Prostate gland (tissue), 2 donors: ENCODE measurements at regions of chr22 and their contacts with region 1.

Region 1: GRCh38 chr22:42437488-42438292 is 5.5 kb upstream of the NFAM1 start:
- DNase-seq: no peak
- H3K4me3 ChIP-seq: peak overlapping the region; percentile 27 to 41
- H3K27ac ChIP-seq: no peak overlapping the region
- H3K4me1 ChIP-seq: peaks cover 5% of the 10 kb centered on the region
- H3K27me3 ChIP-seq: no peaks in the 10 kb centered on the region
- CTCF ChIP-seq: peak; percentile 96 to 99 (median 98)
- POLR2A ChIP-seq: no peak

Region 2: DNA sequence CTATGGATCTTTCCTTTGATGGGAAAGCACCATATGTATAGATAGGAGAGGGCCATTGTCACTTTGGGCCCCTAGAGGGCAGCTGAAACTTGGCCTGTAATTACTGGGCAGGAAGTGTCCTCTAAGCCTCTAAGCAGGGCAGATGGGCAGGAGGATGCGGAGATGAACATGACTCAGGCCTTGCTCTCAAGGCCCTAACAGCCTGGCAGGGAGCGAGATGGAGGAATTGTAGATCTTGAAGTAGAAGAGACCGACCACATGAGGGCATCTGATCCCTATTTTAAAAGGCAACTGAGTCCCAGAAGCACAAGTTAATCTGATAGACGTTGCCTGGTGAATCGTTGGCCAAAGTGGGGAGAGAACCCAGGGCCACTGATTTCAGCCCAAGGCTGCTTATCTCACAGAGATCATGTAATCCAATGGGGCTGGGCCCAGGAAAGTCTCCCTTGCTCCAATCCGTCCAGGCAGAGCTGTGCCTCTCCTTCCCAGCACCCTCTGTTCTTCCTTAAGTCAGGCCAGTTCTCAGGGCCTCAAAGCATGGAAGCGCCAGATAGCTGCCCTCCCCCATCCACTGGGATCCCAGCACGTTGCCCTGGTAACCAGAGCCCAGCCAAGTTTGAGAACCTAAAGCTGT is 471.0 kb before region 1 on chr22:
- intact Hi-C with region 1: loop called (anchors 10 kb)
- DNase-seq: peak; percentile 28
- H3K4me3 ChIP-seq: no peak overlapping the region
- H3K27ac ChIP-seq: no peak overlapping the region
- H3K4me1 ChIP-seq: no peaks in the 10 kb centered on the region
- H3K27me3 ChIP-seq: no peaks in the 10 kb centered on the region
- CTCF ChIP-seq: peak in 2 of 4 experiments; percentile 15 to 30
- POLR2A ChIP-seq: no peak

Region 3: DNA sequence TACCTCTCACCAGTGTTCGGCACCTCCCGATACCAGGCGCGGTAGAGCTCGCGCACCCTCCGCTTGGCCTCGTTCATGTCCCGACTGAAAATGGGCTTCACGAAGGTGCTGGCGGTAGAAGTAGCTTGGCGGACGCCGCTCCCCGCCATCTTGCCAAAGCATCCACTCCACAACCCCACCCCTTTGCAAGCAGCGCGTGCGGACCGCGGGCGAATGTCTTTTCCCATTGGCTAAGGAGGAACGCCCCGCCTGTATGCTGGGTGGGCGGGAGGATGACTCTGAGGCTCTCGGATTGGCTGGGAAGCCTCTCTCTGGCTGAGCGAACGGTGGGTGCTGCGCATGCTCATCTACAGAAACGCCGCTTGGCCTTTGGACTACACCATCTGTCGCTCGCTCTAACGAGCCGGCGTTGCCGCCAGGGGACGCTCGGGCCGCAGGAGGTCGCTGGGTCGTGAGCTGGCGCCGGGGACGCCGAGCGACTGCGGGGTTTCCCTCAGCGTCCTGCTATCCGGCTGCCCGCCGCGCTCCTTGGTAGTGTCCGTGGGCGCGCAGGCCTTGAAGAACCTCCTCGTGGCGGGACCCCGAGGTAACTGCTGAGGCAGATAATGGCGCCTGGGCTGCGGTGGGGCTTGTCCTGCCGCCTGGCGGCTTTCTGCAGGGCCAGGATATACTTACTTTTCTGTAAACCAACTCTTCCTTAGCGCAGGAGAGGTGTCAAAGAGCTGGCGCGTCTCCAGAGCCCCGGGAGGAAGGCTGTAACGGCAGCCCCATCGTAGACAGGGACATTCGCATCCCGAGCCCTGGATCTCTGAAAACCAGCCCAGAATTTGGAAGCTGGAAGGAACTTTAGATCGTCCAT is 346.9 kb before region 1 on chr22 and contains the start of gene NDUFA6:
- intact Hi-C with region 1: loop called (anchors 2 kb)
- DNase-seq: peak; percentile 100
- H3K4me3 ChIP-seq: peak within 1 kb of the TSS; percentile 62 to 68
- H3K27ac ChIP-seq: peak within 1 kb of the TSS; percentile 90 to 92
- H3K4me1 ChIP-seq: no peaks in the 10 kb centered on the region
- H3K27me3 ChIP-seq: no peaks in the 10 kb centered on the region
- CTCF ChIP-seq: peak; percentile 87 to 100 (median 94)
- POLR2A ChIP-seq: peak; percentile 90
- total RNA-seq, gene NDUFA6: 52.9 to 53.1 TPM

Region 4: DNA sequence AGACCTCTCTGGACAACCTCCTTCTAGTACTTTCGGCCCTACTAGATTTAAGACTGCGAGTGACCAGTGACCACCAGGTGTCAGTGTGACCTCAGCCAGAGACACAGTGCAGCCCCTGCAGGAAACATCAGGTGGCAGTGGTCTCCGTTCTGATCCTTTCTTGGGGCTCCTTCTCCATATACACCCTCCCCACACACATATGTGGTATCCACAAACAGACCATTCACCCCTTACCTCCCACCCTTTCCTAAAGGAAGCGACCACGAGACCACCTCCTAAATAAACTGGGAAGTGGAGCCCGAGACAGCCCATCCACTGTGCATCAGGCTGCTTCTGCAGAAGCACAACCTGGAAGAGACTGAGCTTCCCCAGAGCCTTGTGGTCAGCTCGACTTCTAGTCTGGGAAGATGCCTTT is 268.6 kb before region 1 on chr22:
- intact Hi-C with region 1: loop called (anchors 1 kb)
- DNase-seq: peak; percentile 60
- H3K4me3 ChIP-seq: no peak overlapping the region
- H3K27ac ChIP-seq: no peak overlapping the region
- H3K4me1 ChIP-seq: peaks cover 5% of the 10 kb centered on the region
- H3K27me3 ChIP-seq: no peaks in the 10 kb centered on the region
- CTCF ChIP-seq: peak; percentile 73 to 89 (median 85)
- POLR2A ChIP-seq: no peak

Region 5: GRCh38 chr22:42270512-42271417 is 166.9 kb before region 1 on chr22 and contains the start of gene TCF20:
- intact Hi-C with region 1: loop called (anchors 10 kb)
- DNase-seq: peak; percentile 76
- H3K4me3 ChIP-seq: peak within 1 kb of the TSS; percentile 94 to 99
- H3K27ac ChIP-seq: peak within 1 kb of the TSS; percentile 86 to 90
- H3K4me1 ChIP-seq: no peaks in the 10 kb centered on the region
- H3K27me3 ChIP-seq: no peaks in the 10 kb centered on the region
- CTCF ChIP-seq: no peak
- POLR2A ChIP-seq: no peak
- total RNA-seq, gene TCF20: 43.9 to 47.3 TPM

Region 6: DNA sequence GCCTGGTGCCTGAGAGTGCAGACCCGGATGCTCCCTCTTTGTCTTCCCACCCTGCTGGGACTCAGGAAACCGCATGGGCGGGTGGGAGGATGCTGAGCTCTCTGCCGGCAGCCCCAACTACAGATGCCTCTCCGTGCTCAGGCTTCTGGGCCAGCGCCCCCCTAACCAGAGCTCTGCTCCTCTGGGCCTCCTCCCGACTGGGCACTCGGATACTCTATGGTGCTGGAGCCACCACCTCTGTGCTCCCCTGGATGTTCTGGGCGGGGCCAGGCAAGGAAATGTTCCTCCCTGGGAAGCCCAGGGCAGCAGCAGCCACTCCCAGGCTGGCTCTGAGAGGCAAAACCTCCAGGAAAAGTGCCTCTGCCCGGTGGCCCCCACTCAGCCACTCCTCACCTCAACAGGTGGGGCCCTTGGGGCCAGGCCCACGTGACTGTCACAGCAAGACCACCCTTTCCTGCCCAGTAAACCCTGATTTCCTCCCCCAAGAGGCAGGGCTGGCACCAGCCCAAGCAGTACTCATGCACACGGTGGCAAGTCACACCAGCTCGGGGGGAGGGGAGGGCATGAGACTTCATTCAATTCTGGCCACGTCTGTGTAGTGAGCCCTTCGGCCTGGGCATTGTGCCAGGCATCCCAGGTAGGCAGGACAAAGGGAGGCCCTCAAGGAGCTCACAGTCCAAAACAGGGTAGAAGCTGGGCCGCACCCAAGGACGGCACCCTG is 112.5 kb before region 1 on chr22:
- intact Hi-C with region 1: loop called (anchors 10 kb)
- DNase-seq: no peak
- H3K4me3 ChIP-seq: no peak overlapping the region
- H3K27ac ChIP-seq: no peak overlapping the region
- H3K4me1 ChIP-seq: no peaks in the 10 kb centered on the region
- H3K27me3 ChIP-seq: no peaks in the 10 kb centered on the region
- CTCF ChIP-seq: no peak
- POLR2A ChIP-seq: no peak

Region 7: GRCh38 chr22:42484506-42484905 is 46.8 kb after region 1 on chr22:
- intact Hi-C with region 1: no loop called
- DNase-seq: no peak
- H3K4me3 ChIP-seq: no peak overlapping the region
- H3K27ac ChIP-seq: no peak overlapping the region
- H3K4me1 ChIP-seq: no peaks in the 10 kb centered on the region
- H3K27me3 ChIP-seq: no peaks in the 10 kb centered on the region
- CTCF ChIP-seq: no peak
- POLR2A ChIP-seq: no peak